ENCODE measurements at regions of chr11 and their contacts with region 1.

Region 1: DNA sequence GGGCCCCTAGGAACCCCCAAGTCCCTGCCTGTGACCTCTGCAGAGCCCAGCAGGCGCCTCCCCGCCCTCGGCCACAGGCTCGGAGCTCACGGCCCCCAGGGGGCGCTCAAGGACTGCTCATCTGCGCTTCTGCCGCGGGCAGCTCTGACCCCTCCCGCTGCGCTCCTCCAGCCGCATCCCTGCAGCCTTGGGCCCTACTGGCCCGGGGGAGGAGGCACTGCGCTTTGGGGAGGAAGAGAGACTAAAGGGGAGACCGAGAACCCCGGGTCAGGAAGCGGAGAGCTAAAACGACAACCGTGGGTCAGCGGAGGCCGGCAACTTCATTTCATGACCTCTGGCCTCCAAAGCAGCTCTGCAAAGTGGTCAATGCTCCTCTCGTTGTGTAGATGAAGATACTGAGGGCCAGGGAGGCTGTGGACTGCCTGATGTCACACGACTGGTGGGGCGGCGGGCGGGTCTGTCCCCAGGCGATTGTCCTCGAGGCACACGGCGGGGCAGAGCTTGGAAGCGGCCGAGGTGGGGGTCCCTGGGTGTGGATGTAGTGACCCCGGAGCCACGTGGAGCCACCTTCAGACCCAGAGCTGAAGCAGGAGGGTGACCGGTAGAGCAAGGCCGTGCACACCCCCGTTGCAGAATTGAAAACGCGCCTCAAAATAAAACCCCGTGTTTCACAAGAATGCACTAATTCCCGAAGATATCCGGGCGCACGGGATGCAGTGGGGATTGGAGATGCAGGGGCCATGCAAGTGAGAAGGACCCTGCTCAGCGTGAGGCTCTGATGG is 2.7 kb upstream of the KRTAP5-6 start:
- DNase-seq: peak; percentile 85
- ATAC-seq: peak; percentile 84
- H3K4me3 ChIP-seq: peak overlapping the region in 1 of 5 experiments; percentile 19
- H3K4me3 Mint-ChIP-seq: no peak overlapping the region
- H3K27ac ChIP-seq: no peak overlapping the region
- H3K27ac Mint-ChIP-seq: no peak overlapping the region
- H3K4me1 ChIP-seq: peaks cover 8 to 14% of the 10 kb centered on the region in 2 donors
- H3K4me1 Mint-ChIP-seq: peaks cover 5% of the 10 kb centered on the region
- H3K27me3 ChIP-seq: peaks cover 0 to 43% (median 6%) of the 10 kb centered on the region in 4 experiments
- H3K27me3 Mint-ChIP-seq: peaks cover 44% of the 10 kb centered on the region
- CTCF ChIP-seq: peak; percentile 70

Region 2: DNA sequence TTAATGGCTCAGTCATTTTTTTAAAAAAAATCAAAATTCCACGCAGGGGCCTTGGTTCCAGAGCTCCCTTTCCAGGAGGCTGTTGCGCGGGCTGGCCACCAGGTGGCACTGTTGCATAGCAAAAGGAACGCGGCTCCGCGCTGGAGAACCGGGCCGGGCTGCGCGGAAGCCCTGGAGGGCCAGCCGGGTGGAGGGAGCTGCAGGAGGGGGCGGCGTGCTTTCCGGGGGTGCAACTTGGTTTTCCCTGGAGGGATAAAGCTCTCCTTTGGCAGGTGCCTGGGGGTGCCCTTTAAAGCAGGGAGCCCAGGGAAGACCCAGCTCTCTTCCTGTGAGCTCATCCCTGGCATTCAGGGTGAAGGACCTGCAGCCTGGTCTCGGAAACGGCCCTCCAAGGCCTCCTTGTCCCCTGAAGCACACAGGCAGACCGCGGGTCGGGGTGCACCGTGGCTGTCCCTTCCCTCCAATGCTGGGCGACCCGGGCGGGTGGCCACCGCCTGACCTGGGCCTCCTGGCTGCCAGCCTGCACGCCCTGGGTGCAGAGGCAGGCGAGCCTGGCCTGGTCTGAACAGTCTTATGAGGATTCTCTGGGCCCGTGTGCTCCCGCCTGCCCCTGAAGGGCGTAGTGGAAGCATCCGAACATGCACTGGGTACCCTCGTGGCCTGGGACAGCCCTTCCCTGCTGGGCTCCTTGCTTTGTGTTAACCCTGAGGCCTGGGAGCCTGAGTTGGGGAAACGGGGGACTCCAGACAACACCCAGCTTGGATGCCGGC is 41.3 kb before region 1 on chr11:
- CTCF ChIA-PET with region 1: interaction called, 48 read pairs
- POLR2A ChIA-PET with region 1: no interaction called
- intact Hi-C with region 1: loop called (anchors 5 kb)
- DNase-seq: peak; percentile 78
- ATAC-seq: peak; percentile 91
- H3K4me3 ChIP-seq: no peak overlapping the region
- H3K4me3 Mint-ChIP-seq: no peak overlapping the region
- H3K27ac ChIP-seq: no peak overlapping the region
- H3K27ac Mint-ChIP-seq: no peak overlapping the region
- H3K4me1 ChIP-seq: peaks cover 0 to 6% of the 10 kb centered on the region in 2 donors
- H3K4me1 Mint-ChIP-seq: no peaks in the 10 kb centered on the region
- H3K27me3 ChIP-seq: peaks cover 0 to 22% (median 4%) of the 10 kb centered on the region in 4 experiments
- H3K27me3 Mint-ChIP-seq: peaks cover 39% of the 10 kb centered on the region
- CTCF ChIP-seq: peak; percentile 97

Region 3: DNA sequence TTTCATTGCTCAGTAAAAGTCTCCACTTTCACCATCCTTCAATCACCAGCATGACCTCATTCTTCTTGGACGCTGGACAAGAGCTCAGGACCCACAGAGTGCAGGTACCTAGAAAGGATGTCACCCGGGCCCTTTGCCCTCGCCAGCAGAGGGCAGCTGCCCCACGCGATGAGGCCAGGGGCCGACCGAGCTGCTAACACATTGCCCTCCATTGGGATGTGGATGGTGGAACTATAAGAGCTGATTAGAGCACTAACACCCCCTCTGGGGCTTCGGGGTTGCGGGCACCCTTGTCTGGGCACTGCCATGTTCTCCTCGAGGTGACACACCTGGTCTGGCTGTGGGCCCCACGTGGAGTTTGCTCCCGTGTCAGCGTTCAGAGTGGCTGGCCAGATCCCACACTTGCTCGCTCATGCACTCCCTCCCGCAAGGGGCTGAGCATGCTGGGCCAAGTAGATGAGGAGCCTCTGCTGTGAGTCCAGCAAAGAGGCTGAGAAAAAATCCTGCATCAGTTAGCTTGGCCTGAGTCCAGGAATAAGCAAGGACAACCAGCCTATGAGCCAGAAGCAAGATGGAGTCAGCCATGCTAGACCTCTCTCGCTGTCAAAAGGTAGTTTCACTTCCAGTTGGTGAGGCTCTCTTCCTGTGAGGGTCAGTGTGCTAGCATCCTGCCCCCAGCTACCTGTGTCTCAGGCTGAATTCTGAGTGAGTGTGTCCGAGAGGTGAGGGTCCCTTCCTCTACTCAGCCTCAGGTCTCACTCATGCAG is 12.6 kb after region 1 on chr11:
- CTCF ChIA-PET with region 1: interaction called, 17 read pairs
- POLR2A ChIA-PET with region 1: no interaction called
- intact Hi-C with region 1: no loop called
- DNase-seq: no peak
- ATAC-seq: no peak
- H3K4me3 ChIP-seq: no peak overlapping the region
- H3K4me3 Mint-ChIP-seq: no peak overlapping the region
- H3K27ac ChIP-seq: no peak overlapping the region
- H3K27ac Mint-ChIP-seq: no peak overlapping the region
- H3K4me1 ChIP-seq: peaks cover 19 to 32% of the 10 kb centered on the region in 2 donors
- H3K4me1 Mint-ChIP-seq: peaks cover 31% of the 10 kb centered on the region
- H3K27me3 ChIP-seq: peaks cover 0 to 5% (median 0%) of the 10 kb centered on the region in 4 experiments
- H3K27me3 Mint-ChIP-seq: peaks cover 13% of the 10 kb centered on the region
- CTCF ChIP-seq: no peak

Region 4: GRCh38 chr11:1744137-1744886 is 50.1 kb after region 1 on chr11:
- CTCF ChIA-PET with region 1: no interaction called
- POLR2A ChIA-PET with region 1: no interaction called
- intact Hi-C with region 1: no loop called
- DNase-seq: no peak
- ATAC-seq: no peak
- H3K4me3 ChIP-seq: no peak overlapping the region
- H3K4me3 Mint-ChIP-seq: no peak overlapping the region
- H3K27ac ChIP-seq: no peak overlapping the region
- H3K27ac Mint-ChIP-seq: no peak overlapping the region
- H3K4me1 ChIP-seq: peaks cover 0 to 2% of the 10 kb centered on the region in 2 donors
- H3K4me1 Mint-ChIP-seq: peaks cover 2% of the 10 kb centered on the region
- H3K27me3 ChIP-seq: no peaks in the 10 kb centered on the region
- H3K27me3 Mint-ChIP-seq: no peaks in the 10 kb centered on the region
- CTCF ChIP-seq: no peak

Region 5: DNA sequence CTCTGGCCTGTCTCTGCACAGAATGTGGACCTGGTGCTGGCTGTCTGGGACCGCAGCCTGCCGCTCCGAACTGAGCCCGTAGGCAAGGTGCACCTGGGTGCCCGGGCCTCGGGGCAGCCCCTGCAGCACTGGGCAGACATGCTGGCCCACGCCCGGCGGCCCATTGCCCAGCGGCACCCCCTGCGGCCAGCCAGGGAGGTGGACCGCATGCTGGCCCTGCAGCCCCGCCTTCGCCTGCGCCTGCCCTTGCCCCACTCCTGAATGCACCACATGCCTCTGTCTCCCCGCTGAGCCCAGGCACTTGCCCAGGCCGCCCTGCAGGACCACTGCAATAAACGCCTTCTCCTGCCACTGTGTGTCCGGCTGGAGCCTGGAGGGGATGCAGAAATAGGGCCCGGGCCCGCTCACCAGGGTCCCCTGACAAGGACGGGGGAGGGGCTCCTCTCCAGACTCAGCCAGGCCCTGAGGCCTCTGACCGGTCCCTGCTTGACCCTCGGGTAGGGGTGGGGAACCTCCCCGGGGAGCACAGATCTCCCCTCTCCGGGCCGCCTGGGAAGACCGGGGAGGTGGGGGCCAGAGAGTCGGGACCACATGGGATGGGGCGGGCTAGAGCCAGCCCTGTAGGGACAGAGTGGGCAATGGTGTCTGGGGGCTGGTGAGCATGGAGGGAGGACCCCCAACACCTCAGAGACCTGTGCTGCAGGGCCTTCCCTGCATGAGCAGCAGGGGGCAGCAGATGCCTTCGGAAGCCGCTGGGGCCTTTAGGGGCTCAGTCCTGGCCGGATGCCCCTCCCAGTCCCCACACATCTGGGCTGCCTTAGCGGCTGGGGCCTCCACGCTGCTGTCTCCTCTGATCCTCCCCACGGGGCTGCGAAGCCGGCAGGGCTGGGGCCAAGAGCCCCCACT is 143.2 kb after region 1 on chr11:
- CTCF ChIA-PET with region 1: interaction called, 394 read pairs
- POLR2A ChIA-PET with region 1: interaction called, 12 read pairs
- intact Hi-C with region 1: no loop called
- DNase-seq: peak; percentile 88
- ATAC-seq: peak; percentile 75
- H3K4me3 ChIP-seq: peak overlapping the region in 1 of 5 experiments; percentile 5
- H3K4me3 Mint-ChIP-seq: peak overlapping the region; percentile 56
- H3K27ac ChIP-seq: peak overlapping the region; percentile 22 to 68
- H3K27ac Mint-ChIP-seq: peak overlapping the region; percentile 78
- H3K4me1 ChIP-seq: peaks cover 41 to 51% of the 10 kb centered on the region in 2 donors
- H3K4me1 Mint-ChIP-seq: peaks cover 26% of the 10 kb centered on the region
- H3K27me3 ChIP-seq: peaks cover 0 to 19% (median 5%) of the 10 kb centered on the region in 4 experiments
- H3K27me3 Mint-ChIP-seq: no peaks in the 10 kb centered on the region
- CTCF ChIP-seq: peak; percentile 90

Region 6: GRCh38 chr11:2002807-2003206 is 308.6 kb after region 1 on chr11:
- CTCF ChIA-PET with region 1: interaction called, 202 read pairs
- POLR2A ChIA-PET with region 1: no interaction called
- intact Hi-C with region 1: no loop called
- DNase-seq: no peak
- ATAC-seq: peak; percentile 46
- H3K4me3 ChIP-seq: no peak overlapping the region
- H3K4me3 Mint-ChIP-seq: no peak overlapping the region
- H3K27ac ChIP-seq: no peak overlapping the region
- H3K27ac Mint-ChIP-seq: no peak overlapping the region
- H3K4me1 ChIP-seq: no peaks in the 10 kb centered on the region
- H3K4me1 Mint-ChIP-seq: no peaks in the 10 kb centered on the region
- H3K27me3 ChIP-seq: no peaks in the 10 kb centered on the region
- H3K27me3 Mint-ChIP-seq: no peaks in the 10 kb centered on the region
- CTCF ChIP-seq: no peak

Measured in B cell (primary cell).